HCT116 (cell line): ENCODE measurements at regions of chr11 and their contacts with region 1.

Region 1: GRCh38 chr11:12331239-12331874 is 46.0 kb upstream of the PARVA start:
- DNase-seq: peak; percentile 72
- ATAC-seq: peak; percentile 91
- H3K4me3 ChIP-seq: no peak overlapping the region
- H3K27ac ChIP-seq: no peak overlapping the region
- H3K4me1 ChIP-seq: peaks cover 0 to 2% of the 10 kb centered on the region in 2 experiments; a peak in 1 of 4 replicates
- H3K27me3 ChIP-seq: no peaks in the 10 kb centered on the region
- CTCF ChIP-seq: peak; percentile 67 to 84 (median 80)
- POLR2A ChIP-seq: no peak
- RAD21 ChIP-seq: peak; percentile 94

Region 2: GRCh38 chr11:12356944-12357650 is 25.7 kb after region 1 on chr11:
- CTCF ChIA-PET with region 1: no interaction called
- POLR2A ChIA-PET with region 1: no interaction called
- RAD21 ChIA-PET with region 1: no interaction called
- intact Hi-C with region 1: no loop called
- DNase-seq: no peak
- ATAC-seq: no peak
- H3K4me3 ChIP-seq: no peak overlapping the region
- H3K27ac ChIP-seq: no peak overlapping the region
- H3K4me1 ChIP-seq: no peaks in the 10 kb centered on the region
- H3K27me3 ChIP-seq: no peaks in the 10 kb centered on the region
- CTCF ChIP-seq: no peak
- POLR2A ChIP-seq: no peak
- RAD21 ChIP-seq: no peak

Region 3: GRCh38 chr11:12411806-12412727 is 80.7 kb after region 1 on chr11:
- CTCF ChIA-PET with region 1: interaction called, 15 read pairs
- POLR2A ChIA-PET with region 1: no interaction called
- RAD21 ChIA-PET with region 1: no interaction called
- intact Hi-C with region 1: loop called (anchors 1 kb)
- DNase-seq: peak; percentile 56
- ATAC-seq: peak; percentile 96
- H3K4me3 ChIP-seq: peak overlapping the region in 1 of 2 experiments; percentile 39; a peak in 2 of 4 replicates
- H3K27ac ChIP-seq: peak overlapping the region; percentile 6; the same call in 1 of the 2 replicates
- H3K4me1 ChIP-seq: peaks cover 5 to 16% of the 10 kb centered on the region in 2 experiments; a peak in 3 of 4 replicates
- H3K27me3 ChIP-seq: no peaks in the 10 kb centered on the region
- CTCF ChIP-seq: peak; percentile 75 to 90 (median 82); a peak in 5 of 6 replicates
- POLR2A ChIP-seq: no peak
- RAD21 ChIP-seq: peak; percentile 84

Region 4: DNA sequence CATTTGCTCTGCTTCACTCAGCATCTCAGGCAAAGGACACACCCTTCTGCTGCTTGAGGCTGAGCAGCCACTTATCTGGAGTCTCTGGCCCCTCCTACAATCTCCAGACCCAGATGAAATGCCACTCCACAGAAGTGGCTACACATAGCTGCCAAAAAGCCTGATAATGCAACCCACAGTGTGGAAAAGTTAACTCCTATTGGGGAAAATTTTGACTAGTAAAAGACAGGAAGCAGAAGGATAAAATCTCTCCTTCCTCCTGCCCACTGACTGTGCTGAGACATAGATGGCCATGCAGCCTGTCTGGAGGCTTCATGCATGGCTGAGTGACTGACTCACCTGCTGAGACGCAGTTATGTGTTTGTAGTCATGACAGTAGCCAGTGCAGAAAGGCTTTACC is 250.6 kb after region 1 on chr11:
- CTCF ChIA-PET with region 1: interaction called, 3 read pairs
- POLR2A ChIA-PET with region 1: no interaction called
- RAD21 ChIA-PET with region 1: no interaction called
- intact Hi-C with region 1: loop called (anchors 10 kb)
- DNase-seq: peak; percentile 38
- ATAC-seq: peak; percentile 90
- H3K4me3 ChIP-seq: no peak overlapping the region
- H3K27ac ChIP-seq: no peak overlapping the region
- H3K4me1 ChIP-seq: peaks cover 6 to 10% of the 10 kb centered on the region in 2 experiments; a peak in 3 of 4 replicates
- H3K27me3 ChIP-seq: no peaks in the 10 kb centered on the region
- CTCF ChIP-seq: no peak
- POLR2A ChIP-seq: no peak
- RAD21 ChIP-seq: no peak

Region 5: GRCh38 chr11:12693479-12694181 is 362.3 kb after region 1 on chr11:
- CTCF ChIA-PET with region 1: no interaction called
- POLR2A ChIA-PET with region 1: no interaction called
- RAD21 ChIA-PET with region 1: no interaction called
- intact Hi-C with region 1: no loop called
- DNase-seq: peak; percentile 96
- ATAC-seq: peak; percentile 83
- H3K4me3 ChIP-seq: peak overlapping the region; percentile 19 to 47
- H3K27ac ChIP-seq: peak overlapping the region; percentile 92
- H3K4me1 ChIP-seq: peaks cover 91 to 99% of the 10 kb centered on the region in 2 experiments
- H3K27me3 ChIP-seq: no peaks in the 10 kb centered on the region
- CTCF ChIP-seq: no peak
- POLR2A ChIP-seq: no peak
- RAD21 ChIP-seq: peak; percentile 43

Region 6: DNA sequence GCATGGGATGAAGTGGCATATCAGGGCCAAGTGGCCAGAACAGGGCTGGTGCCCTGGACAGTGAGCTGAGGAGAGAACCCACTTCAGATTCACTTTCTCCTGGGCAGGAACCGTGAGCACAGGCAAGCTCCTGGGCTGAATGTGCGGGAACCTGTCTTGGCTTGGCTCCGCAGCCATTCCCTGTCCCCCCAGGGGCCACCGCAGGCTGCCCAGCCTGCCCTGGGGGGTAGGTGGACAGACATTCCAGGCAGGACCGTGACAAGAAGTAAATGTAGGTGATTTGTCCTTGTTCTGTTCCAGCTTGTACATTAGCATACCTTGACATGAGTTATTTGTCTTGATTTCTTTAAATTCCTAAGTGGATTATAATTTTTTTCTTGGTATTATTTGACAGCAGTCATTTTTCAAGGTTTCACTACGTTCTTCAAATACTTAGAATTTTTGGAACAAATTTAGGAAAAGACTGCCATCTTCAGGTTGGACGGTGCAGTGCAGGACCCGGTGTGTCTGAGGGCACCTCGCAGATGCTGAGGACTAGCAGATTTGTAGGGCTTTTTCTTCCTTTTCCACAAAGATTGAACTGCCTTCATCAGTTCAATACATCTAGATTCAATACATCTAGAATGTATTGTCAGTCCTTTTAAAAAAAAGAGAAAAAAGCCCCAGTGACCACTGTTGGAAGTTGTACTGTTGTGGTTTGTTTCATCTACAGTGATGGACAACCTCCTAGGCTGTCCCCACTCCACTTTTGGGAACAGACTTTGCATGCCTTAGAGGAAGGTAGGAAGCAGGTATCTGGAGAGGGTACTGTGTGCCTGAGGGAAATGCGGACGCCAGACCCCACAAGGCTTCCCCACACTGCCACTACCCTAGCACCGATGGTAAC is 562.7 kb after region 1 on chr11:
- CTCF ChIA-PET with region 1: interaction called, 47 read pairs
- POLR2A ChIA-PET with region 1: no interaction called
- RAD21 ChIA-PET with region 1: interaction called, 4 to 5 read pairs
- intact Hi-C with region 1: loop called (anchors 1 kb)
- DNase-seq: peak; percentile 15
- ATAC-seq: peak; percentile 87
- H3K4me3 ChIP-seq: no peak overlapping the region
- H3K27ac ChIP-seq: no peak overlapping the region
- H3K4me1 ChIP-seq: no peaks in the 10 kb centered on the region
- H3K27me3 ChIP-seq: no peaks in the 10 kb centered on the region
- CTCF ChIP-seq: peak; percentile 71 to 94 (median 80); a peak in 5 of 6 replicates
- POLR2A ChIP-seq: no peak
- RAD21 ChIP-seq: peak; percentile 86